Activated CD8-positive, alpha-beta memory T cell treated with anti-CD3 and anti-CD28 coated beads, Interleukin-2, amount 10 ng/mL, durations not matched to agents 7 days and 5 days (primary cell): ENCODE measurements at regions of chr19 and their contacts with region 1.

Region 1: GRCh38 chr19:9857920-9858746 is 23.0 kb downstream of the PIN1 start:
- DNase-seq: peak; percentile 55
- ATAC-seq: peak; percentile 72
- H3K4me3 Mint-ChIP-seq: peak overlapping the region; percentile 75
- H3K27ac Mint-ChIP-seq: peak overlapping the region; percentile 92
- H3K4me1 Mint-ChIP-seq: peaks cover 64% of the 10 kb centered on the region
- H3K27me3 Mint-ChIP-seq: no peaks in the 10 kb centered on the region

Region 2: DNA sequence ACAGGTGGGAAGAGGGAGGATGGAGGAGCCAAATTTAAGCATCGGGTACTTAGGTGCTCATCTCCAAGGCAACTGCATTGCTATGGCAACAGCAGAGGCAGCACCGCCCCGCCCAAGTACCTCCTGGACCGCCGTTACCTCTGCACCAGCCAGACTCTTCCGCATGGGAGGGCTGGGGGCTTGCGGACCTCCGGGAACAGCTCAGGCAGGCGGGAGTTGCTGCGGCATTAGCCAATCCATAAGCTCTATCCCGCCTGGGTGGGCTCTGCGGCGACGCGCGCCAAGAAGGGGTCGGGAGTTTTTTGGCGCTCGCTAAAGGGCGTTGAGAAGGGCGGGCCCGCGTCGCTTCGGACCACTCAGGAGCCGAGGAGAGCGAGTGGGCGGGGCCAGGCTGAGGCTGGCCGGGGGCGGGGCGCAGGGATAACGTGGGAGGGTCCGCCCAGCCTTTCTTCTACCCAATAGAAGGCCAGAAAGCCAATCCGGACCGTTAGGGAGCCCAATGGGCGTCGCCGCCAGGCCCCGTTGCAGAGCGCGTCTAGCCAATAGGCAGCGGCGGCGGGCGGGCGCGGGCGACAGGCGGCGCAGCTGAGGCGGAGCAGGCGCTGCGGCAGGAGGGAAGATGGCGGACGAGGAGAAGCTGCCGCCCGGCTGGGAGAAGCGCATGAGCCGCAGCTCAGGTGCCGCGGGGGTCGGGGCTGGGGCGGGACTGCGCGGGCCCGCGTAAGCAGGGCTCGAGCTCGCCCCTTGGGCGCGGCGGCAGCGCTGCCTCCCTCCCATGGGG is 23.2 kb before region 1 on chr19 and contains the start of gene PIN1:
- CTCF ChIA-PET with region 1: interaction called, 10 read pairs
- DNase-seq: peak; percentile 100
- ATAC-seq: peak; percentile 98
- H3K4me3 Mint-ChIP-seq: peak within 1 kb of the TSS; percentile 90
- H3K27ac Mint-ChIP-seq: peak within 1 kb of the TSS; percentile 92
- H3K4me1 Mint-ChIP-seq: peaks cover 27% of the 10 kb centered on the region
- H3K27me3 Mint-ChIP-seq: no peaks in the 10 kb centered on the region
- total RNA-seq, gene PIN1: 103 to 116 TPM

Region 3: DNA sequence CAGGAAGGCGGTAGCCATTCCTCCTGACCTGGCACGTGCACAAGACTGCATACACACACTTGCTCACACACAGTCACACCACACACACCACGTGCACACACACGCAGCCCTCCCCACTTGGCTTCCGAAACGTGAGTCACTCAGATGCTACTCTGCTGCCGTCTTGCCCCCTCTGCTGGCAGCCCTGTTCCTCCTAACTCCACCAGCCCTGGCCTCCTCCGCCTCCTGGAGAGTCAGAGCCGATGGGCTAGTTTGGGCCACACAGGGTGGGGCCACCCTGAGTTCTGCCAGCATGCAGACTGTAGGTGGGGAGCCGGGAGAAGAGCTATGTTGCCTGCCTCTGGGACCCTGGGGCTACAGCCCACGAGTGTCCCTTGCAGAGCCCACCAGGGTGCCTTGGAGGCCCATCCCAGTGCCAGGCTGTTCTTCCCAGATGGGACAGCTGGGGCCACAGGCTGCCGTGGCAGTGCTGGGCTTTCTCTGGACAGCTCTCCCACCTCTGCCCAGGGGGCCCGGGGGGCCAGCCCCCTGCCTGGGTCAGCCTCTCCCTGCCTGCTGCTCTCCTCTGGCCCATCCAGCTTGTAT is 11.0 kb before region 1 on chr19:
- CTCF ChIA-PET with region 1: interaction called, 13 read pairs
- DNase-seq: peak; percentile 58
- ATAC-seq: peak; percentile 59
- H3K4me3 Mint-ChIP-seq: no peak overlapping the region
- H3K27ac Mint-ChIP-seq: peak overlapping the region; percentile 49
- H3K4me1 Mint-ChIP-seq: peaks cover 9% of the 10 kb centered on the region
- H3K27me3 Mint-ChIP-seq: no peaks in the 10 kb centered on the region

Region 4: DNA sequence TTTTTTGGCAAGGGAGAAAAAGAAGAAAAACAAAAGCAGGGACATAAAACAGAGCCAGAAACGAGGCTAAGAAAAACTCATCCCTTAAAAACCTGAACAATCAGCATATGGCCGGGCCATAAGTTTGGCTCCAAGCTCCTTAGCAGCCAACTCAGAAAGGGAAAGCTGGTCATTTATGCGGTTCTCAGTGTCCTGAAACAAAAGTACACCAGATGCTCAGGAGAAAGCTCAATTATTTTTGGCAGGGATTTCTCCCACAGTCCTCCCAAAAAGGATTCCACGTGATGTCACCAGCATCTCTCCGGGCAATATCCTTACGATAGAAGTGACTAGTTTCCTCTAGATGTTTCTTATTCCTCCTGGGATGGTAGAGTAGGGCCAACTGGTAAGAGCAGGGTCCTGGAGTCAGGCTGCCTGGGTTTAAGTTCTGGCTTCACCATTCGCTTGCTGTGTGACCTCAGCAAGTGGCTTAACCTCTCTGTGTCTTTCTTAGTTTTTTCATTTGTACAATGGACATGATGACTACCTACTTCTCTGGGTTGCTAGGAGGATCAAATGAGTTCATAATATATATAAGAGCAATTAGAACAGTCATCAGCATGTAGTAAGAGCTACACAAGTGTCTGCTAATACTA is 11.0 kb after region 1 on chr19:
- CTCF ChIA-PET with region 1: interaction called, 12 read pairs
- DNase-seq: no peak
- ATAC-seq: no peak
- H3K4me3 Mint-ChIP-seq: no peak overlapping the region
- H3K27ac Mint-ChIP-seq: no peak overlapping the region
- H3K4me1 Mint-ChIP-seq: peaks cover 19% of the 10 kb centered on the region
- H3K27me3 Mint-ChIP-seq: no peaks in the 10 kb centered on the region